ENCODE measurements at regions of chr21 and their contacts with region 1.

Region 1: GRCh38 chr21:34345892-34346291 is 17.9 kb upstream of the KCNE2 start:
- DNase-seq: no peak
- ATAC-seq: peak in 1 of 2 donors; percentile 34
- H3K4me3 ChIP-seq: no peak overlapping the region
- H3K27ac ChIP-seq: peak overlapping the region; percentile 17
- H3K4me1 ChIP-seq: peaks cover 7% of the 10 kb centered on the region
- H3K27me3 ChIP-seq: no peaks in the 10 kb centered on the region

Region 2: DNA sequence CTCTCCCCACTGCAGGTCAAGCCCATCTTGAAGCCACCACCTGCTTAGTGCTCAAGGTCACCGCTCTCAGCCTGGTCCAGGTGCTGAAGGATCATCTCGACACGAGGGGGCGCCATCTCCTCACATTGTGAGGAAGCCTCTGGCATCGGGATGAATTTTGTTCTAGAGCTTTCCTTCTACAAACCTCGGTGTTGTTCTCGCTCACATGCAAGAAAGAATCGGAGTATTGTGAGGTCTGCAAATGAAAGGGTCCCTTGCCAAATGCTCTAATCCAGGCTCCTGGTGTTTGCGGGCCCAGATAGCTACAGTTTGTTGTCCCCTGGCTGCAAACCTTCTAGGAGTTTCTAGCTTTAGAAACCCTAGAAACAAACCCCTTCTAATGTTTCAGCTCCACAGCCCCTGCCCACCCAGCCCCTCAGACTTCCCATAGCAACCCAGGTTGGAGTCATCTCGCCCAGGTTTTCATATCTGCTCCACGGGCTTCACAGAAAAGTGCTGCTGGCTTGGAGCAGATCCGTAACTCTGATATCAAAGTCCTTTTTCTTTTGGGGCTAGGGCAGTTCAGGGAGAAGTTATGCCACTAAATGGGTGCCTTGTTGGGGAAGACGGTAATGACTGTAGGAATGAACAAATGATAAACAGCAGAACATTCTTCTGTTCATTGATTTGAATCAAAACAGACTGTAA is 421.7 kb before region 1 on chr21:
- intact Hi-C with region 1: loop called in 3 of 4 experiments (anchors 2 kb)
- DNase-seq: peak; percentile 86 to 95 (median 92)
- ATAC-seq: peak; percentile 94 to 96
- H3K4me3 ChIP-seq: no peak overlapping the region
- H3K27ac ChIP-seq: no peak overlapping the region
- H3K4me1 ChIP-seq: no peaks in the 10 kb centered on the region
- H3K27me3 ChIP-seq: no peaks in the 10 kb centered on the region

Region 3: GRCh38 chr21:34276711-34277425 is 69.0 kb before region 1 on chr21:
- intact Hi-C with region 1: no loop called
- DNase-seq: no peak
- ATAC-seq: no peak
- H3K4me3 ChIP-seq: no peak overlapping the region
- H3K27ac ChIP-seq: no peak overlapping the region
- H3K4me1 ChIP-seq: peaks cover 3% of the 10 kb centered on the region
- H3K27me3 ChIP-seq: no peaks in the 10 kb centered on the region